B cell (primary cell): ENCODE measurements at regions of chr17 and their contacts with region 1.

Region 1: GRCh38 chr17:40362696-40363110 is 1.8 kb downstream of the GJD3 start:
- DNase-seq: peak; percentile 86
- ATAC-seq: peak; percentile 80
- H3K4me3 ChIP-seq: peak overlapping the region in 4 of 5 experiments; percentile 28 to 58 (median 52)
- H3K4me3 Mint-ChIP-seq: peak overlapping the region; percentile 85
- H3K27ac ChIP-seq: no peak overlapping the region
- H3K27ac Mint-ChIP-seq: peak overlapping the region; percentile 34
- H3K4me1 ChIP-seq: peaks cover 15 to 17% of the 10 kb centered on the region in 2 donors
- H3K4me1 Mint-ChIP-seq: peaks cover 12% of the 10 kb centered on the region
- H3K27me3 ChIP-seq: peaks cover 0 to 34% (median 8%) of the 10 kb centered on the region in 4 experiments
- H3K27me3 Mint-ChIP-seq: peaks cover 12% of the 10 kb centered on the region
- CTCF ChIP-seq: peak; percentile 70

Region 2: GRCh38 chr17:40203131-40203530 is 159.6 kb before region 1 on chr17:
- CTCF ChIA-PET with region 1: no interaction called
- POLR2A ChIA-PET with region 1: no interaction called
- intact Hi-C with region 1: loop called (anchors 5 kb)
- DNase-seq: no peak
- ATAC-seq: no peak
- H3K4me3 ChIP-seq: no peak overlapping the region
- H3K4me3 Mint-ChIP-seq: no peak overlapping the region
- H3K27ac ChIP-seq: no peak overlapping the region
- H3K27ac Mint-ChIP-seq: no peak overlapping the region
- H3K4me1 ChIP-seq: no peaks in the 10 kb centered on the region
- H3K4me1 Mint-ChIP-seq: no peaks in the 10 kb centered on the region
- H3K27me3 ChIP-seq: peaks cover 0 to 4% (median 0%) of the 10 kb centered on the region in 4 experiments
- H3K27me3 Mint-ChIP-seq: peaks cover 9% of the 10 kb centered on the region
- CTCF ChIP-seq: no peak

Region 3: DNA sequence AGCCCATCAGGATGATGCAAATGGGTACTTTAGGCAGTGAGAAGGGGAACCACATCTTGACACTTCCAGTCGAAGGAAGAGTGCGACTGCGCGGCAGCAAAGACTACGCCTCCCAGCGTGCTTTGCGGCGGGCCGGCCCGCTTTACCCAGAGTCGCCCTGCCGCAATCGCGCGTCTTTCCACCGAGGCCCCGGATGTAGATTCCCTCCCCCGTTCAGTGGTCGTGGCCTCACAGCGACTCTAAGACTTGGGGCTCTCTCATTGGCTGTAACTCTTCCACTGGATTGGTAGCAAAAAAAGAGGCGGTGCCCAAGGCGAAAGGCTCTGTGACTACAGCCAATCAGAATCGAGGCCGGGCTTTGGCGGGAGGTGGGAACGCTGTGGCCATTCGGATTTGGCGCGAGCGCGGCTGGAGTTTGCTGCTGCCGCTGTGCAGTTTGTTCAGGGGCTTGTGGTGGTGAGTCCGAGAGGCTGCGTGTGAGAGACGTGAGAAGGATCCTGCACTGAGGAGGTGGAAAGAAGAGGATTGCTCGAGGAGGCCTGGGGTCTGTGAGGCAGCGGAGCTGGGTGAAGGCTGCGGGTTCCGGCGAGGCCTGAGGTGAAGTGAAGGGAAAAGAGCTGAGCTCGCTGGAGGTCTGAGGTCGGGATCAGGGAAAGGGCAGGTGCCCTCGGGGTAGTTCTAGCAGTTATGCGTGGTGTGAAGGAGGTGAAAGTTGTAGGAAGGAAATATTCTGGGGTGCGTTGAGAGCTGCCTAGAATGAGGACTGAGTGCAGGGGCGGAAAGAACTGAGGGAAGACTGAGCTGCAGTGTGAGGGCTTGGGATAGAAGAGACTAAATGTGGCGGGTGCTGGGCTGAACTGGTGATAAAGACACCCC is 75.0 kb before region 1 on chr17 and contains the start of gene CDC6:
- CTCF ChIA-PET with region 1: interaction called, 871 read pairs
- POLR2A ChIA-PET with region 1: no interaction called
- intact Hi-C with region 1: no loop called
- DNase-seq: peak; percentile 99
- ATAC-seq: peak; percentile 95
- H3K4me3 ChIP-seq: peak within 1 kb of the TSS; percentile 27 to 85 (median 69)
- H3K4me3 Mint-ChIP-seq: peak within 1 kb of the TSS; percentile 97
- H3K27ac ChIP-seq: peak within 1 kb of the TSS in 1 of 2 donors; percentile 42
- H3K27ac Mint-ChIP-seq: peak within 1 kb of the TSS; percentile 70
- H3K4me1 ChIP-seq: peaks cover 9 to 11% of the 10 kb centered on the region in 2 donors
- H3K4me1 Mint-ChIP-seq: peaks cover 15% of the 10 kb centered on the region
- H3K27me3 ChIP-seq: no peaks in the 10 kb centered on the region
- H3K27me3 Mint-ChIP-seq: no peaks in the 10 kb centered on the region
- CTCF ChIP-seq: no peak
- total RNA-seq, gene CDC6: 0.63 and 2.2 TPM in 2 replicates

Region 4: DNA sequence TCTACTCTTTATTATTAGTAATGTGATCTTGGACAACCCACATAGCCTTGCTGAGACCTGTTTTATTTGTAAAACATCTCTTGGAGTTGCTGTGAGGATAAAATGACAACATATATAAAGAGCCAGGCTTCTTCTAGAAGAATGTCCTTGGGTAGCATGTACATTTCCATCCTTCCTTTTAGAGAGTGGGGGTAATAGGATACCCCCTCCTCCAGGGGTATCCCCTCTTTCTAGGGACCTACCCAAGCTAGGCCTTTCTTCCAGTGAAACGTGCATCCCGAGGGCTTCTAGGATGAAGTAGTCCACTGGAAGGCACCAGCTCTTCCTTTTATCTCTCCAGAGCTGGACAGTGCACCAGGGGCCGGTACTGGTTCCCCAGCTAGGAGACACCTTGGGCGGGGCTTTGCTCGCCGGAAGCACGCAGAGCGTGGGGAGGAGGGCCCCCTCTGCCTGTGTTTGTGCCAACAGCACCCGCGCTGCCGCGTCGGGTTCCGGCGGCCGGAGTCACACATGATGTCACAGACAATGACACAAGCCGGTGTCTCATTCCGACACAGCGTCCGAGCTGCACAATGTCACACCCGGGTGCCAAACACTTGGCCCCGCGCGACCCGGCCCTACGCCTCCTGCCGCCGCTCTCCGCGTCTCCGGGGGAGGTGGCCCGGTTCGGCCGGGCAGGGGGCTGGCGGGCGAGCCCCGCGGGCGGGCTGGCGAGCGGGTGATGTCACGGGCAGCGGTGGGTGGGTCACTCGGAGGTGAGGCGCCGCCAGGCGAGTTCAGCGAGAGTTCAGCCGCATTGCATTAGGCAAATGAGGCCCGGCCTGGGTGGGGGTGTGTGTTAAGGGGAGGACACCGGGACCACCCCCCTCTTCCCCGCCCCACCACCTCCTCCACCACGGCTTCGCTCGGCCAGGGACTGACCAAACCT is 21.6 kb before region 1 on chr17:
- CTCF ChIA-PET with region 1: no interaction called
- POLR2A ChIA-PET with region 1: no interaction called
- intact Hi-C with region 1: no loop called
- DNase-seq: peak; percentile 95
- ATAC-seq: peak; percentile 76
- H3K4me3 ChIP-seq: peak overlapping the region; percentile 51 to 84 (median 71)
- H3K4me3 Mint-ChIP-seq: peak overlapping the region; percentile 91
- H3K27ac ChIP-seq: peak overlapping the region; percentile 67 to 88
- H3K27ac Mint-ChIP-seq: peak overlapping the region; percentile 92
- H3K4me1 ChIP-seq: peaks cover 70 to 85% of the 10 kb centered on the region in 2 donors
- H3K4me1 Mint-ChIP-seq: peaks cover 74% of the 10 kb centered on the region
- H3K27me3 ChIP-seq: no peaks in the 10 kb centered on the region
- H3K27me3 Mint-ChIP-seq: no peaks in the 10 kb centered on the region
- CTCF ChIP-seq: no peak

Region 5: GRCh38 chr17:40417609-40418427 is 55.1 kb after region 1 on chr17 and contains the start of gene TOP2A:
- CTCF ChIA-PET with region 1: interaction called, 52 read pairs
- POLR2A ChIA-PET with region 1: no interaction called
- intact Hi-C with region 1: loop called (anchors 1 kb)
- DNase-seq: peak; percentile 99
- ATAC-seq: peak; percentile 99
- H3K4me3 ChIP-seq: peak within 1 kb of the TSS; percentile 63 to 93 (median 84)
- H3K4me3 Mint-ChIP-seq: peak within 1 kb of the TSS; percentile 89
- H3K27ac ChIP-seq: peak within 1 kb of the TSS; percentile 63 to 72
- H3K27ac Mint-ChIP-seq: peak within 1 kb of the TSS; percentile 86
- H3K4me1 ChIP-seq: peaks cover 7 to 17% of the 10 kb centered on the region in 2 donors
- H3K4me1 Mint-ChIP-seq: peaks cover 15% of the 10 kb centered on the region
- H3K27me3 ChIP-seq: no peaks in the 10 kb centered on the region
- H3K27me3 Mint-ChIP-seq: no peaks in the 10 kb centered on the region
- CTCF ChIP-seq: no peak
- total RNA-seq, gene TOP2A: 3.0 and 3.1 TPM in 2 replicates

Region 6: DNA sequence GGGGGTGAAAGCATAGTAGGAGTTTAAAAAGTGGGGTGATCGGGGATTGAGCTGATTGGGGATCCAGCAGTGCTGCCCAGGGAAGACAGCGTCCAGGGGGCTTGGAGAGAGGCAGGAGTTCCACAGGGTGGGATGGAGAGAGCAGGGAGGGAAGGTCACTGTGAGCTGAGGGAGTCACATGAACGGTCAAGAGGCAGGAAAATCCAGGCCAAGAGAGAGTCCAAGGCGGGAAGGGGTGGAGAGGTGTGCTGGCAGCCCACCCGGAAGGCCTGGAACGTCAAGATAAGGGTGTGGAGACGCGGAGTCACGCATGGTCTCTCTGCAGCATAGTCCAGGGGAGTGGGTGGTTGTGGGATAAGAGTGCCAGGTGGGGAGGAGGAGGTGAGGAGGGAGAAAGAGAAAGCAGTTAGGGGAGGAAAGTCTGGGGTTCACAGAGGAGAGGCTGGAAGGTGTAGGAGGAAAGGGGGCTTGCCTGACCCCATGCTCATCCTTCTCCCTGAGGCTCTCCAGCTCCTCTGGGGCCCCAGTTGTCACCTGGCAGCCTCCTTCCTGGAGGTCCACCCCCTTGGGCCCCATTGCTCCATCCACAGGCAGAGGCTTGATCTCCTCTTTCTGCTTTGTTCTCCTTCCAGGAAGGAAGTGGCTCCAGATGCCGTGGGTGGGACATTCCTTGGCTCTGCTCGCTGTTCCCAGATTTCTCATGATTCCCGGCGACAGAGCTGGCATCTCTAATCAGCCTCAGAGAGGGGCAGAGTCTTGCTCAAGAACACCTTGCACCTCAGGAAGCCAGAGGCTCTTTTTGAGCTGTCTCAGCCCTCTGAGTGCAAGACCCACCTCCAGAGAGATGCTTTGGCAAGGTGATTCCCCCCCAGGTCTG is 173.8 kb after region 1 on chr17:
- CTCF ChIA-PET with region 1: interaction called, 114 read pairs
- POLR2A ChIA-PET with region 1: interaction called, 4 read pairs
- intact Hi-C with region 1: loop called (anchors 1 kb)
- DNase-seq: no peak
- ATAC-seq: no peak
- H3K4me3 ChIP-seq: no peak overlapping the region
- H3K4me3 Mint-ChIP-seq: no peak overlapping the region
- H3K27ac ChIP-seq: no peak overlapping the region
- H3K27ac Mint-ChIP-seq: peak overlapping the region; percentile 78
- H3K4me1 ChIP-seq: peaks cover 47 to 77% of the 10 kb centered on the region in 2 donors
- H3K4me1 Mint-ChIP-seq: peaks cover 78% of the 10 kb centered on the region
- H3K27me3 ChIP-seq: no peaks in the 10 kb centered on the region
- H3K27me3 Mint-ChIP-seq: no peaks in the 10 kb centered on the region
- CTCF ChIP-seq: no peak